Activated CD4-positive, alpha-beta T cell treated with anti-CD3 and anti-CD28 coated beads, Interleukin-2, amount 10 ng/mL, durations not matched to agents 24 days and 14 days (primary cell): ENCODE measurements at regions of chr3 and their contacts with region 1.

Region 1: GRCh38 chr3:111071257-111072015 is at the start of gene NECTIN3:
- DNase-seq: peak; percentile 94
- H3K4me3 Mint-ChIP-seq: peak within 1 kb of the TSS; percentile 94
- H3K27ac Mint-ChIP-seq: peak within 1 kb of the TSS; percentile 87
- H3K4me1 Mint-ChIP-seq: peaks cover 30% of the 10 kb centered on the region
- H3K27me3 Mint-ChIP-seq: peaks cover 55% of the 10 kb centered on the region
- total RNA-seq, gene NECTIN3: 3.0 and 4.4 TPM in 2 replicates

Region 2: DNA sequence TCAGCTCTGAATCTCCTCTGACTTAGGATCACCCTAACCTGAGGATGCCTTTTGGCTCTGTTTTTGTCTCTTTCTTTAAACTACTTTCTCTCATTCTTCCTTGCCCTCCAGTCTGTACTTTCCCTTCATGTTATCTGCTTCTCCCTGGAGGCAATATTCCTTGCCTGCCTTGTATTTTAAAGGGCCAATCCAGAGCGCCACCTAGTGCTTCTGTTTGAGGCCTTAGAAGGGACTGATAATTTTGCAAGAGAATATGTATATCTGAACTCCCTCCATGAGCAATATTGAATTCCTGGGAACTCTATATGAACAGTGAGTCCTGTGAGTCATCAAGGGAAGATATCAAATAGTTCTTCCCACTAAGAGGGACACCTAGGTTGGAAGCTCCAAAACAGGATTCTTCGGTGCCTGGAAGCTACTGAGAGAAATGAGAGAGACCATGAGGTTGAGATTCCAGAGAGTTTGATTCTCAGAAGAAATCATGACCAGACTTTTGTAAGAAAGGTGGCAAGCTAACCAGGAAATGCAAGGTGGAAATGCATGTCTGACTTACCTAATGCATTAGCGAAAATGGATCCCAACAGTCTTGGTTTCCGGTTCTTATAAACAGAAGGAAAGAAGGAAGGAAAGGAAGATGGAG is 266.7 kb after region 1 on chr3:
- intact Hi-C with region 1: loop called (anchors 2 kb)
- DNase-seq: peak; percentile 84
- H3K4me3 Mint-ChIP-seq: no peak overlapping the region
- H3K27ac Mint-ChIP-seq: no peak overlapping the region
- H3K4me1 Mint-ChIP-seq: peaks cover 24% of the 10 kb centered on the region
- H3K27me3 Mint-ChIP-seq: peaks cover 2% of the 10 kb centered on the region

Region 3: DNA sequence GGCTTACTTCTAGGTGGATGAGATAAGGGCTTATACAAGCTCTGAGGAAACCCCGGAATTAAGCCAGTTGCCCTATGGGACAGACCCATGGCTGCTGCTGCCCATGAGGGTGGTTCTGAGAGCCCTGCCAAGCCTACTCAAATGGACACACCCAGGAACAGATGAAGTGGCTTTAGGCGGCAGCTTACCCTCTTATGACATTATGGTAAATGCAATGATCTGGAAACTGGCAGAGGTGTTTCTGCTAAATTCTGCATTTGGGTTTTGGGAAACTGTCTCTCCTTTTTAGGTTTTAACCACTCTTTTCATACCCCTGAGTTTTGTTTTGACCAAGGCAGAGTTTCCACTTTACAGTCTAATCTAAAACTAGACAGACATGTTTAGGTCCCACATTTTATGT is 532.7 kb after region 1 on chr3:
- intact Hi-C with region 1: loop called (anchors 5 kb)
- DNase-seq: peak; percentile 66
- H3K4me3 Mint-ChIP-seq: peak overlapping the region; percentile 40
- H3K27ac Mint-ChIP-seq: peak overlapping the region; percentile 91
- H3K4me1 Mint-ChIP-seq: peaks cover 74% of the 10 kb centered on the region
- H3K27me3 Mint-ChIP-seq: no peaks in the 10 kb centered on the region